Caco-2 (cell line): ENCODE measurements at regions of chr7 and their contacts with region 1.

Region 1: DNA sequence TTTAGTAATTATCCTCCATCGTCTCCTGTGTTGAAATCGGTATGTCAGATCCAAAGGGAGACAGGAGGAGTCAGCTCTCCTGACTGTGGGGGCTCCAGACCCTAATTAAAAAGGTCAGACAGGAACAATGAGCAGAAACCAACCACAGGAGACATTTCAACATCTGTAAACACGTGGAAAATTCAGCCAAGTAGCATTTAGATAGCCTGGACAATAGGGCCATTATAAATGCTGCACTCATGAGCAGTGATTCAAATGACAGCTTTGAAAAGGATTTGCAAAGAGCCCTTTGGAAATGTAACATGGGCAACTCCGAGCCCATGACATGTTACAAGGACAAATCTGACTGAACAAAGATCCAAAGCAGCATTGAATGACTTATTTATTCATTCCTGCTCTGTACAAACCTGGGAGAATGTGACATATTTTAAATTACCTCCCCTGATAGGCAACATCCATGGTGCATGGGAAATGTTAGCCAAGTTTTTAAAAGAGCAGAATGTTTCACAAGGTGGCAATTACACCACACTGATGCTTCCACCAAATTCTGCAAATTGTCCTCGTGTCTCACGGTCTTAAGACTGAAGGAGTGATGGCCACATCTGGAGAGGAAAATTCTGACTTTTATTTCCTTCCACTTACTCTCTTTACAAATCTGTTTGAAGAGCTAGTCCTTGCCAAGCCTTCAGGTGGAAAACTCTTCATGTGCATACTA is 113.3 kb upstream of the KMT2E start:
- DNase-seq: no peak
- H3K4me3 ChIP-seq: no peak overlapping the region
- H3K4me3 Mint-ChIP-seq: no peak overlapping the region
- H3K27ac Mint-ChIP-seq: no peak overlapping the region
- H3K4me1 ChIP-seq: no peaks in the 10 kb centered on the region
- H3K4me1 Mint-ChIP-seq: no peaks in the 10 kb centered on the region
- H3K27me3 ChIP-seq: no peaks in the 10 kb centered on the region
- H3K27me3 Mint-ChIP-seq: no peaks in the 10 kb centered on the region
- CTCF ChIP-seq: no peak

Region 2: DNA sequence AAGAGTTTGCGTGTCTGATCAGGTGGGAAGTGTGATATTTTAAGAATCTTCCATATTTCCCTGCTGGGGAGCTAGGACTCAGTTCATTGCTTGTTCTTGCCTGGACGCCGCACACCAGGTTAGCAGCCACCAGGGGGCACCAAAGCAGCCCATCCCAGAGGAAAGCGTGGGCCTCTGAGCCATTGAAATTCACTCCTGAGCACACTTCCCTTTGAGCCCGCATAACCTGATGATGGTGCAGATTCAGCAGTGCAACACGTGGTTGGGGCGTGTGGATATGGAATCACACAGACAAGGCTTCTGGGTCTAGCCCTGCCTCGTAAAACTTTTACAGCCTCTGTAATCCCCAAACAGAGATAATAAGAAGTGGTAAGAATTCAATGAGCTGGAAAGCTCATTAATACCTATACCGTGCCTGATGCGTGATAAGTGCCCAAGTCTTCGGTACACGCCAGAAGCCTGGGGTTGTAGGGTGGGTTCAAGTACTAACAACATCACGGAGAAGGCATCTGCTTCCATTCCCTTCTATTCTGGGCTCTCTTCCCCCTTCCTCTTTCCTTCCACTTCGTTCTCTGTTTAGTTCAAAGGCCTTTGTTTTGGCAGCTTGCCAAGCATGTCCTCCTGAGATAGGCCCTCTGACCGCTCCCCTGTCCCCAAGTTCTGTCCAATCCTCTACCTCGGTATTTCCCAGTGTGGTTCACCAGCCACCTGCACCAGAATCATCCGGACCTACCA is 16.8 kb before region 1 on chr7:
- CTCF ChIA-PET with region 1: interaction called, 11 read pairs
- POLR2A ChIA-PET with region 1: no interaction called
- intact Hi-C with region 1: no loop called
- DNase-seq: peak; percentile 89 to 92
- H3K4me3 ChIP-seq: no peak overlapping the region
- H3K4me3 Mint-ChIP-seq: peak overlapping the region; percentile 51
- H3K27ac Mint-ChIP-seq: no peak overlapping the region
- H3K4me1 ChIP-seq: 0 out of 2 replicates have a peak, but pooled peaks cover 4% of the 10 kb centered on the region
- H3K4me1 Mint-ChIP-seq: peaks cover 6% of the 10 kb centered on the region
- H3K27me3 ChIP-seq: no peaks in the 10 kb centered on the region
- H3K27me3 Mint-ChIP-seq: peaks cover 3% of the 10 kb centered on the region
- CTCF ChIP-seq: peak; percentile 76 to 96